ENCODE measurements at regions of chr18 and their contacts with region 1.

Region 1: DNA sequence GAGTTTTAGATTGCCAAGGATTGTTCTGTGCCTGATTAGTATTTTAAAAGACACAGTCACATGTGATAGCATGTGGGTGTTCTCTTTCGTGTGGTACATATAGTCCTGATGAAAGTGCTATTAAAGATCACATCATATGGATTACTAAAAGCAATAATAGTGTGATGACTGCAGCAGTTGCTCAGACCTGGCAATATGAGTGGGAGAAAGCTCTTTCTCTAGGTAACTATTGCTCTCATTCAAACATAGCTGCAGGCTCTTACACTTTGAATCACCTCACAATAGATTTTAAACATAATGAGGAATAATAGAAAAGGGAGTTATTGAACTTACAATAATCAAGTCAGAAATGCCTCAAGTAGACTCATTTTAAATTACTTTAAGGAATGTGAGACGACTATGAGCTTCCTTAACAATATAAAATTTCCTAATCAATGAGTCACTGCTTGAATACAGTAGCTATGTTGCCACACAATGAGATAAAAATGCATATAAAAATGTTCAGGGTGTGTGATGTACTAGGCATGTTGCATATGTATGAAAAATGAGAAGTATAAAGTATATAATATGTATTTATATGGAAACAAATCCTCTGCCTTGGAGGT is 452.1 kb downstream of the TMX3 start:
- DNase-seq: peak; percentile 88
- ATAC-seq: peak; percentile 90
- H3K4me3 ChIP-seq: no peak overlapping the region
- H3K27ac ChIP-seq: peak overlapping the region; percentile 59
- H3K4me1 ChIP-seq: peaks cover 24% of the 10 kb centered on the region
- H3K27me3 ChIP-seq: no peaks in the 10 kb centered on the region
- CTCF ChIP-seq: no peak

Region 2: DNA sequence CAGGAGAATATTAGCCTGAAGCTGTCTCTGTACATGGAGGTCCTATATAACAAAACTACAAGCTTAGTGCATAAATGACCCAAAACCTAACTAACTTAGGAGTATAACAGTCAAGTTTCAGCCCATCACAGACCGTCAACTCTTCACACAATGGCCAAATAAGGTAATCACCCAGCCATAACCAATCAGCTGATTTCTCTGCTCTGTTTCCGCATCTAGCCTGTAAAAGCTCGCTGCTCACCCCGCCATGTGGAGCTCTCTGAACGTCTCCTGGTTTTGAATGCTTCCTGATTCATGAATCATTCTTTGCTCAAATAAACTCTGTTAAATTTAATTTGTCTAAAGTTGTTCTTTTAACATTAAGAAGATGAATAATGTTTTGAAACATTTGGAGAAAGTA is 141.5 kb before region 1 on chr18:
- CTCF ChIA-PET with region 1: no interaction called
- POLR2A ChIA-PET with region 1: no interaction called
- intact Hi-C with region 1: loop called (anchors 5 kb)
- DNase-seq: peak; percentile 79
- ATAC-seq: peak; percentile 86
- H3K4me3 ChIP-seq: no peak overlapping the region
- H3K27ac ChIP-seq: peak overlapping the region; percentile 70
- H3K4me1 ChIP-seq: peaks cover 27% of the 10 kb centered on the region
- H3K27me3 ChIP-seq: no peaks in the 10 kb centered on the region
- CTCF ChIP-seq: peak; percentile 17; the same call in 1 of the 2 replicates

Region 3: GRCh38 chr18:68275616-68276015 is 12.8 kb after region 1 on chr18:
- CTCF ChIA-PET with region 1: no interaction called
- POLR2A ChIA-PET with region 1: no interaction called
- intact Hi-C with region 1: no loop called
- DNase-seq: peak; percentile 82
- ATAC-seq: peak; percentile 100
- H3K4me3 ChIP-seq: no peak overlapping the region
- H3K27ac ChIP-seq: no peak overlapping the region
- H3K4me1 ChIP-seq: peaks cover 12% of the 10 kb centered on the region
- H3K27me3 ChIP-seq: no peaks in the 10 kb centered on the region
- CTCF ChIP-seq: no peak